ENCODE measurements at regions of chr17 and their contacts with region 1.

Region 1: GRCh38 chr17:28777178-28777577 is 33.4 kb downstream of the TRAF4 start:
- DNase-seq: no peak
- H3K4me3 ChIP-seq: no peak overlapping the region
- H3K27me3 ChIP-seq: no peaks in the 10 kb centered on the region
- CTCF ChIP-seq: no peak

Region 2: DNA sequence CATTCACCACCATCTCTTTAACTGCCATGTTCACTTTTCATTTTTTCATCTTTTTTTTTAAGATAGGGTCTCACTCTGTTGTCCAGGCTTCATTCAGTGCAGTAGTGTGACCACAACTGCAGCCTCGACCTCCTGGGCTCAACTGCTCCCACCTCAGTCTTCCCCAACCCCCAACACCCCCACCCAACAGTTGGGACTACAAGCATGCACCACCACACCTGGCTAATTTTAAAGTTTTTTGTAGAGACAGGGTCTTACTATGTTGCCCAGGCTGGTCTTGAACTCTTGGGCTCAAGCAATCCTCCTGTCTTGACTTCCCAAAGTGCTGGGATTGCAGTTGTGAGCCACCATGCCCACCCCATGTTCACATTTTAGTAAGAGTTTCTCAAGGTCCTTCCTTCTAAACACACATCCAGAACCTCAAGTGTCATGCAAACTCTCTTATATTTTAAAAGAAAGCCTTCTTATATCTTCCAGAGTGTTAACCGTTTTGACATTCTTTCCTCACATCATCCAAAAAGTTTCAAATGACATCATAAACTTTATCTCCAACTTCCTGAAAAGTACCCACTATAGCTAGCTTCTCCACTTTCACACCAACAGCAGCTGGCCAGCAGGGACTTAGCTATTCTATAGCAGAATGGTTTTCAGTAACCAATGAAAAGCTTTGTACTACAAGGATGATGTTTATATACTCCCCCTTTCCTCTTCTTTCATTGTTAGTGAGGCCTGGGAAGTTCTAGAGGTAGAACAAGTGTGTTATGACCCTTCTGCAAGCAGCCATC is 15.9 kb after region 1 on chr17:
- CTCF ChIA-PET with region 1: no interaction called
- POLR2A ChIA-PET with region 1: interaction called, 14 read pairs
- DNase-seq: no peak
- H3K4me3 ChIP-seq: no peak overlapping the region
- H3K27me3 ChIP-seq: no peaks in the 10 kb centered on the region
- CTCF ChIP-seq: no peak

Region 3: DNA sequence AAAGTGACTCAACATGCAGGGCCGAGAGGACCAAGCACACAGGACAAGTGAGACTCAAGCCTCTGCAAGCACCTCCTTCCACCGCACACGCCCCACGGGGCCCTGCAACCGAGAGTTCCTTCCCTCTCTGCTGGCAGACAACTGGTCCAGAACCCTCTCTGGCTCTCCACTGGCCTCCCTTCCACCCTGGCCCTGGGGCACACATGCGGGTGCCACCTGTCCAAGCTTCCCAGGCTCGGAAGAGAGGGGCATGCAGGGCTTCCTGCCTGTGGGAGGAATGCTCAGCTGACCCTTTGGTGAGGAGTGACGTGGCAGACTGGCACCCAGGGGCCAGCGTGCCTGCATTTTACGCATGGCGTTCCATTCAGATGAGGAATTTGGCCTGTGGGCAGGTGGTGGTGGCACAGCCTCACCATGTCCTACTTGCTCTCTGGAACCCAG is 325.6 kb after region 1 on chr17:
- CTCF ChIA-PET with region 1: no interaction called
- POLR2A ChIA-PET with region 1: no interaction called
- DNase-seq: no peak
- H3K4me3 ChIP-seq: no peak overlapping the region
- H3K27me3 ChIP-seq: no peaks in the 10 kb centered on the region
- CTCF ChIP-seq: no peak